RWPE1 (cell line): ENCODE measurements at regions of chrX and their contacts with region 1.

Region 1: DNA sequence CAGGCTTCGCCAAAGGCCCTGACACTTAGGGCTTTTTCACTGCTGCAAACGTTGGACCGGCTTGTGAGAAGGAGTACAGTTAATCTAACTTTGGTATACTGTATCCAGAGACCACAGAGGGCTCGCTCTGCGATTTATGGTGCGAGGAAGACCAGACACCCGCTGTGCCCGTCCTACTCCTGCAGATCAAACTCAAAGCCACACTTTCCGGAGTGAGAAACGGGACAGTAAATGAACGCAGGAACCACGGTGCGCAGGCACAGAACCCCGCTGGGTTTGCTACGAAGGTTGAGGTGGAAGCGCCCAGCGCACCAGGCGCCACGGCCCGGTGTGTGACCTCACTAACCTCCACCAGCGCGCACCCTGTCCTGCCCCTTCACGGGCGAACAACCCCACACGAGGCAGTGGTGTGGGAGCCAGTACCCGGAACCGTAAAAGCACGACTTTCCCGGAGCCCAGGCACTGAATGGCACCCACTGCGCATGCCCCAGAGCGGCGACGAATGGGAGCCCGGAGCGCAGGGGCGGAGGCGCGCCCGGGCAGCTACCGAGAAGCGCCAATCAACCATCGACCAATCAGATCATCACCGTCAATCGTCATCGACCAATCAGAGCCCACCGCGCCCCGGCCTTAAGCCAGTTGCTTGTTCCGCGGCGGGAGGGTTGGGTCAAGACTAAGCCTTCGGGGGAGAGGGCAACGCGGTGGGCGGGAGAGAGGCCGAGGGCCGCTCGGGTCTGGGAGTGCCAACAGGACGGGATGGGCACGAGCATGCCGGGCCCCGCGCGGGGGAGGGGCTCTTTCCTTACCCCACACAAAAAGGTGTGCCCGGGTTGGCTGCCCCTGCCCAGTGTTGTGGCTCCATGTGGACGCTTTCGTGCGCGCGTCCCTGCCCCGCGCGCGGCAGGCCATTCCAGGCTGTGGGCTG is 21.3 kb upstream of the WDR45 start:
- DNase-seq: peak; percentile 98
- H3K27ac ChIP-seq: peak overlapping the region; percentile 83
- CTCF ChIP-seq: no peak

Region 2: DNA sequence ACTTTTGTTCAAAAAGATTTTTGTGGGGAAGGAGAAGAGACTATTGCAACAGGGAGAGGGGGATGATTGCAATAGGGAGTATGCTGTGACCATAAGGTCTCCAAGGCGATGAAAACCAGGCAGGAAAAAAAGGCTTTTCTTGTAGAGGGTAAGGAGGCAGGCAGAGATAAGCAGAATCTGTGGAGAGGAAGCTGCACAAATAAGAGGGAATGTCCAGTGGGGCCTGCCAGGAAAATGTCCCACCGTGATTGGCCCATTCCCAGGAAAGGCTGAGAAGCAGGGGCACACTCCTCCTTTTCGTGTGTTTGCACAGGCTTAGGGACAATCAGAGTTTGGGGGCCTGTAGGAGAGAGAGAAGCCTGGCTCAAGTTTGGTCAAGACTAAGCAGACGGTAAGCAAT is 1065.1 kb before region 1 on chrX:
- CTCF ChIA-PET with region 1: no interaction called
- POLR2A ChIA-PET with region 1: interaction called, 12 read pairs
- DNase-seq: no peak
- H3K27ac ChIP-seq: no peak overlapping the region
- CTCF ChIP-seq: no peak

Region 3: GRCh38 chrX:48539345-48540027 is 561.5 kb before region 1 on chrX and contains the start of gene TBC1D25:
- CTCF ChIA-PET with region 1: no interaction called
- POLR2A ChIA-PET with region 1: interaction called, 12 read pairs
- DNase-seq: peak; percentile 90
- H3K27ac ChIP-seq: peak within 1 kb of the TSS; percentile 84
- CTCF ChIP-seq: 0 out of 2 replicates have a peak, but pooled peaks have one; percentile 18

Region 4: DNA sequence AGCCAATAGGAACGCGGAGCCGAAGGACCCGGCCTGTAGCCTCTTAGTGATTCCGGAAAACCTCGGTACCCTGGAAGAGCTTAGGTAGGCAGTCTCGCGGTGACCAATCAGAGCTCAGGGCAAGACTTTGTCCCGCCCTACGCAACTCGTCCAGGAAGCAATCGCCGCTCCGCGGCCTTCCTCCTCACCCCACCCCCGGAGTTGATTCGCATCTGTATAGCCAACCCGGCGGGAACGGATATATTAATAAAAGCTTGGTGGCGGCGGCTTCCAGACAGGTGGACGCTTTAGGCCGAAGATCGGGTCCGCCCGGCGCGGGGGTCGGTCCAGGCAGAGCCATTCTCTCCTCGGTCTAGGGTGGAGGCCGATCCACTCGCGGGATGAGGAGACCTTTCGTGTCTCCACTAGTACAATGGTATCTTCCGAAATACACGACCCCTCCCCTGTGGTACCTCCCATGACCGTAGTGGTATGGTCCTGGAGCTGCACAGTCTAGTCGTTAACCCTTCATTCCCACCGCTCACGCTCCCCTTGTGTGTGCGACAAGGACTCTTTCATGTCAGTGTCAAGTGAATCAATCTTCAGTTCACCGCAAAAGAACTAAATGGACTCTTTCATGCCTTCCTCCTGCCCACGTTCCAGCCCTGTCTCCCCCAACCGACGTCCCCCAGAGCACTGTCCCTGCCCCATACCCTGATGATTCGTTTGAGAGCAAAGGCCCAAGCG is 363.6 kb before region 1 on chrX:
- CTCF ChIA-PET with region 1: no interaction called
- POLR2A ChIA-PET with region 1: no interaction called
- DNase-seq: peak; percentile 94
- H3K27ac ChIP-seq: peak overlapping the region; percentile 92
- CTCF ChIP-seq: no peak